ENCODE measurements at regions of chr12 and their contacts with region 1.

Region 1: GRCh38 chr12:22443379-22444316 is 100.7 kb downstream of the C2CD5 start:
- DNase-seq: peak; percentile 9 to 88 (median 50)
- ATAC-seq: peak; percentile 86 to 100 (median 96)
- H3K4me3 ChIP-seq: no peak overlapping the region
- H3K4me3 Mint-ChIP-seq: no peak overlapping the region
- H3K27ac ChIP-seq: no peak overlapping the region
- H3K27ac Mint-ChIP-seq: no peak overlapping the region
- H3K4me1 ChIP-seq: peaks cover 0 to 5% of the 10 kb centered on the region in 2 experiments
- H3K4me1 Mint-ChIP-seq: peaks cover 0 to 9% (median 5%) of the 10 kb centered on the region in 3 donors
- H3K27me3 ChIP-seq: no peaks in the 10 kb centered on the region
- H3K27me3 Mint-ChIP-seq: no peaks in the 10 kb centered on the region

Region 2: DNA sequence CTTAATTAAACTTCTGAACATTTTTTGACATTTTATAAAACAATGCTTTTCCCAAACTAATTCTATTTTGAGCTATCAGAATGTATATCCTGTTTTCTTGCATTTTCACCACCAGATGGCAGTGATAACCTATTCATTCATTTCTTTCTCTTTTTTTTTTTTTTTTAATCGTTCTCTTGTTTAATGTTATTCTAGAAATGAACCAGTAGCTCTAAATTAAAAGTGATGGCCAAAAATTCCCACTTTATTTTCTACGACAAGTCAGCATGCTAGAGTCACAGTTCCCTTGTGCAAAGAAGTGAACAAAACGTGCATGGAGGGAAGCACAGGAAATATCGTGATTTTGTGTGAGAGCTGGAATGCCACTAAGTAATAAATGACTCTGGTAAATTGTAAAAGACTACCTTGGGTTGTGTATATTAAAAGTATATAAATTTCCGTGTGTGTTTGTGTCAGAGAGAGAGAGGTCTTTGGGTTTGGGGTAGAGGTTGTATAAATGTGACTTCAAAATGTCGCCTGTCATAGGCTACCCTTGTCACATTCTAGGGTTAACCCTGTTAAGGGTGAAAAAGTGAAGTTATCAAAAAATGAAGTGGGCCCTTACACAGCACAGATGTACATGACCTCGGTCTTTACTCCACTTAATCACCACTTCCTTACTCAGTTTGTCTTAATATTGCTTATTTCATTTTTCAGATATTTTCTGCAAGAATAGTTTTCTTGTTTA is 745.6 kb before region 1 on chr12:
- CTCF ChIA-PET with region 1: interaction called, 9 to 10 read pairs
- POLR2A ChIA-PET with region 1: no interaction called
- DNase-seq: peak in 1 of 35 experiments; percentile 68
- ATAC-seq: no peak
- H3K4me3 ChIP-seq: no peak overlapping the region
- H3K4me3 Mint-ChIP-seq: no peak overlapping the region
- H3K27ac ChIP-seq: no peak overlapping the region
- H3K27ac Mint-ChIP-seq: no peak overlapping the region
- H3K4me1 ChIP-seq: peaks cover 0 to 2% of the 10 kb centered on the region in 2 experiments
- H3K4me1 Mint-ChIP-seq: peaks cover 7 to 14% (median 13%) of the 10 kb centered on the region in 3 donors
- H3K27me3 ChIP-seq: no peaks in the 10 kb centered on the region
- H3K27me3 Mint-ChIP-seq: peaks cover 0 to 3% of the 10 kb centered on the region in 2 donors

Region 3: GRCh38 chr12:21813125-21813524 is 630.5 kb before region 1 on chr12:
- CTCF ChIA-PET with region 1: no interaction called
- POLR2A ChIA-PET with region 1: no interaction called
- DNase-seq: no peak
- ATAC-seq: no peak
- H3K4me3 ChIP-seq: no peak overlapping the region
- H3K4me3 Mint-ChIP-seq: no peak overlapping the region
- H3K27ac ChIP-seq: no peak overlapping the region
- H3K27ac Mint-ChIP-seq: no peak overlapping the region
- H3K4me1 ChIP-seq: no peaks in the 10 kb centered on the region
- H3K4me1 Mint-ChIP-seq: no peaks in the 10 kb centered on the region
- H3K27me3 ChIP-seq: no peaks in the 10 kb centered on the region
- H3K27me3 Mint-ChIP-seq: peaks cover 0 to 7% of the 10 kb centered on the region in 2 donors

Region 4: GRCh38 chr12:22083167-22083566 is 360.5 kb before region 1 on chr12:
- CTCF ChIA-PET with region 1: interaction called, 11 to 15 read pairs
- POLR2A ChIA-PET with region 1: interaction called, 3 read pairs
- DNase-seq: peak in 16 of 35 experiments; percentile 10 to 70 (median 22)
- ATAC-seq: peak in 2 of 4 experiments; percentile 41 to 49
- H3K4me3 ChIP-seq: no peak overlapping the region
- H3K4me3 Mint-ChIP-seq: no peak overlapping the region
- H3K27ac ChIP-seq: no peak overlapping the region
- H3K27ac Mint-ChIP-seq: no peak overlapping the region
- H3K4me1 ChIP-seq: no peaks in the 10 kb centered on the region
- H3K4me1 Mint-ChIP-seq: no peaks in the 10 kb centered on the region
- H3K27me3 ChIP-seq: no peaks in the 10 kb centered on the region
- H3K27me3 Mint-ChIP-seq: no peaks in the 10 kb centered on the region

Region 5: GRCh38 chr12:22100958-22101748 is 342.5 kb before region 1 on chr12:
- CTCF ChIA-PET with region 1: interaction called in 1 of 2 experiments, 12 read pairs
- POLR2A ChIA-PET with region 1: interaction called in 1 of 2 experiments, 8 read pairs
- DNase-seq: peak in 21 of 35 experiments; percentile 3 to 71 (median 22)
- ATAC-seq: peak in 3 of 4 experiments; percentile 50 to 71 (median 64)
- H3K4me3 ChIP-seq: no peak overlapping the region
- H3K4me3 Mint-ChIP-seq: no peak overlapping the region
- H3K27ac ChIP-seq: no peak overlapping the region
- H3K27ac Mint-ChIP-seq: no peak overlapping the region
- H3K4me1 ChIP-seq: peaks cover 2 to 16% of the 10 kb centered on the region in 2 experiments
- H3K4me1 Mint-ChIP-seq: peaks cover 0 to 15% (median 12%) of the 10 kb centered on the region in 3 donors
- H3K27me3 ChIP-seq: peaks cover 0 to 11% of the 10 kb centered on the region in 2 experiments
- H3K27me3 Mint-ChIP-seq: no peaks in the 10 kb centered on the region

Region 6: GRCh38 chr12:22459838-22460490 is 16.3 kb after region 1 on chr12:
- CTCF ChIA-PET with region 1: interaction called, 9 to 12 read pairs
- POLR2A ChIA-PET with region 1: no interaction called
- DNase-seq: peak in 3 of 35 experiments; percentile 9 to 66 (median 19)
- ATAC-seq: peak in 3 of 4 experiments; percentile 41 to 62 (median 52)
- H3K4me3 ChIP-seq: no peak overlapping the region
- H3K4me3 Mint-ChIP-seq: no peak overlapping the region
- H3K27ac ChIP-seq: no peak overlapping the region
- H3K27ac Mint-ChIP-seq: no peak overlapping the region
- H3K4me1 ChIP-seq: no peaks in the 10 kb centered on the region
- H3K4me1 Mint-ChIP-seq: no peaks in the 10 kb centered on the region
- H3K27me3 ChIP-seq: no peaks in the 10 kb centered on the region
- H3K27me3 Mint-ChIP-seq: no peaks in the 10 kb centered on the region